ENCODE measurements at regions of chr22 and their contacts with region 1.

Region 1: GRCh38 chr22:21001560-21002325 is at the start of gene THAP7:
- DNase-seq: peak; percentile 90 to 99 (median 97)
- ATAC-seq: peak; percentile 86
- H3K4me3 ChIP-seq: peak within 1 kb of the TSS; percentile 81 to 82
- H3K4me3 Mint-ChIP-seq: peak within 1 kb of the TSS; percentile 91
- H3K27ac ChIP-seq: peak within 1 kb of the TSS; percentile 93 to 100
- H3K27ac Mint-ChIP-seq: peak within 1 kb of the TSS; percentile 99
- H3K4me1 ChIP-seq: peaks cover 38% of the 10 kb centered on the region
- H3K4me1 Mint-ChIP-seq: peaks cover 29% of the 10 kb centered on the region
- H3K27me3 ChIP-seq: no peaks in the 10 kb centered on the region
- H3K27me3 Mint-ChIP-seq: no peaks in the 10 kb centered on the region
- CTCF ChIP-seq: no peak
- total RNA-seq, gene THAP7: 71.2 to 73.6 TPM

Region 2: GRCh38 chr22:19717691-19718455 is 1283.9 kb before region 1 on chr22:
- CTCF ChIA-PET with region 1: no interaction called
- POLR2A ChIA-PET with region 1: no interaction called
- intact Hi-C with region 1: loop called in 1 of 2 experiments (anchors 5 kb)
- DNase-seq: peak; percentile 71 to 90 (median 78)
- ATAC-seq: peak; percentile 95
- H3K4me3 ChIP-seq: peak overlapping the region; percentile 29 to 46
- H3K4me3 Mint-ChIP-seq: peak overlapping the region; percentile 65
- H3K27ac ChIP-seq: no peak overlapping the region
- H3K27ac Mint-ChIP-seq: no peak overlapping the region
- H3K4me1 ChIP-seq: peaks cover 29% of the 10 kb centered on the region
- H3K4me1 Mint-ChIP-seq: peaks cover 12% of the 10 kb centered on the region
- H3K27me3 ChIP-seq: peaks cover 17 to 20% of the 10 kb centered on the region in 2 experiments
- H3K27me3 Mint-ChIP-seq: peaks cover 36% of the 10 kb centered on the region
- CTCF ChIP-seq: peak; percentile 97

Region 3: DNA sequence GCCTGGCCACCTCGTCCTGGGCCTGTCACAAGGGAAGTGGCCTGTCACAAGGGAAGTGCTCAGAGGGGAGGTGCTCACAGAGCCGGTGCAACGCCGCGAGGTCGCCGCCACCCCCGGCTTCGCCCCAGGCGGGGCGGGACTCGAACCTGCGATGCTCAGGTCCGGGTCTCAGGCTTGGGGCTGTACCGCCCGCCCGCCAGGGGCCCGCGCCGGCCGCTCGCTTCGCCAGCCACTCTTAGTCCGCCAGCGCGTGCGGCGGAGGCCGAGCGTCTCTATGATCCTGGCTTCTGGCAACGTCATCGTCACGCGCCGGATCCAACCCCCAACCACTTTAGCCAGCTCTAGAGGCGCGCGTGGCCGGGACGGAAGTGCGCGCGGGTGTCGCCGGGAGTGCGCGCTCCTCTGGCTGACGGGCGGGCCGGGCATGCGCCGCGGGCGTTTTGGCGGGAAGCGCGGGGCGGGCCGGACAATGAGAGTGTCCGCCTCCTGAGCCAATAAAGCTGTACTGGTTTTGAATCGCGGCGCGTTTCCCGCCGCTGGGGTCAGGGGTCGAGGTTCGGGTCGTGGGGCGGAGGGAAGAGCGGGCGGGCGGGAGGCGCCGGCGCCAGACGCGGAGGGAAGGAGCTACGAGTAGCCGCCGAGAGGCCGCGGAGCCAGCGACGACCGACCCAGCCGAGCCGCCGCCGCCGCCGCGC is 884.6 kb before region 1 on chr22 and contains the start of gene TRMT2A:
- CTCF ChIA-PET with region 1: no interaction called
- POLR2A ChIA-PET with region 1: no interaction called
- intact Hi-C with region 1: loop called in 1 of 2 experiments (anchors 2 kb)
- DNase-seq: peak; percentile 91 to 99 (median 96)
- ATAC-seq: peak; percentile 80
- H3K4me3 ChIP-seq: peak within 1 kb of the TSS; percentile 80 to 96
- H3K4me3 Mint-ChIP-seq: peak within 1 kb of the TSS; percentile 90
- H3K27ac ChIP-seq: peak within 1 kb of the TSS; percentile 81 to 94
- H3K27ac Mint-ChIP-seq: peak within 1 kb of the TSS; percentile 93
- H3K4me1 ChIP-seq: peaks cover 38% of the 10 kb centered on the region
- H3K4me1 Mint-ChIP-seq: peaks cover 43% of the 10 kb centered on the region
- H3K27me3 ChIP-seq: no peaks in the 10 kb centered on the region
- H3K27me3 Mint-ChIP-seq: no peaks in the 10 kb centered on the region
- CTCF ChIP-seq: no peak
- total RNA-seq, gene TRMT2A: 57.8 to 62.8 TPM

Region 4: GRCh38 chr22:20852076-20852475 is 149.7 kb before region 1 on chr22:
- CTCF ChIA-PET with region 1: no interaction called
- POLR2A ChIA-PET with region 1: no interaction called
- intact Hi-C with region 1: no loop called
- DNase-seq: no peak
- ATAC-seq: no peak
- H3K4me3 ChIP-seq: no peak overlapping the region
- H3K4me3 Mint-ChIP-seq: no peak overlapping the region
- H3K27ac ChIP-seq: no peak overlapping the region
- H3K27ac Mint-ChIP-seq: peak overlapping the region; percentile 37
- H3K4me1 ChIP-seq: peaks cover 24% of the 10 kb centered on the region
- H3K4me1 Mint-ChIP-seq: peaks cover 58% of the 10 kb centered on the region
- H3K27me3 ChIP-seq: no peaks in the 10 kb centered on the region
- H3K27me3 Mint-ChIP-seq: no peaks in the 10 kb centered on the region
- CTCF ChIP-seq: no peak

Region 5: DNA sequence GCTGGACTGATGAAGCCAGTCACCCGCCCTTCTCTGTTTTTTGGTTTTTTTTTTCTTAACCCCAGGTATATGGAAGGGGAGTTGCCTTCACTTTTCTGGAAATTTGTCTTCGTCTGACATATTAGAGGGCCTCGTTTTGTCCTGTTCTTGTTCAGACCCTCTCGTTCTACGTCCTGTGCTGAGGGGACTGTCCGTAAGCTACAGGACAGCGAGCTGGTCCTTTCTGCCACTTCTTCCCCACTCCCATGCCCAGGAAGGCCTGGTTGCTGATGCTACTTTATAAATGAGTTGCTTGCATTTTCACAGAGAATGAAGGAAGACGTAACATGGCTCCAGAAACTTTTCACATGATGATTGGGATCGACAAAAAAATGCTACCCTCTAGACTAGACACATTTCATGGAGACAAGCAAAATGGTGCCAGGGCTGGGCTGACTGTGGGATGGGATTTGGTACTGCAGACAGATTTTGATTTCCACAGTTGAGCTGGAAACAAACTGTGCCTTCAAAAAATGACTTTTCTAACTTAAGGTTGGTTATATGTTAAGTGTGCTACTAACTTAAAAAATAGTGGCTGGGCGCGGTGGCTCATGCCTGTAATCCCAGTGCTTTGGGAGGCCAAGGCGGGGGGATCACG is 111.7 kb before region 1 on chr22:
- CTCF ChIA-PET with region 1: no interaction called
- POLR2A ChIA-PET with region 1: no interaction called
- intact Hi-C with region 1: no loop called
- DNase-seq: no peak
- ATAC-seq: no peak
- H3K4me3 ChIP-seq: no peak overlapping the region
- H3K4me3 Mint-ChIP-seq: no peak overlapping the region
- H3K27ac ChIP-seq: no peak overlapping the region
- H3K27ac Mint-ChIP-seq: no peak overlapping the region
- H3K4me1 ChIP-seq: no peaks in the 10 kb centered on the region
- H3K4me1 Mint-ChIP-seq: no peaks in the 10 kb centered on the region
- H3K27me3 ChIP-seq: no peaks in the 10 kb centered on the region
- H3K27me3 Mint-ChIP-seq: peaks cover 2% of the 10 kb centered on the region
- CTCF ChIP-seq: no peak

Region 6: GRCh38 chr22:20916983-20917810 is 84.5 kb before region 1 on chr22 and contains the start of gene CRKL:
- CTCF ChIA-PET with region 1: no interaction called
- POLR2A ChIA-PET with region 1: no interaction called
- intact Hi-C with region 1: loop called (anchors 1 kb)
- DNase-seq: peak; percentile 89 to 99 (median 96)
- ATAC-seq: peak; percentile 94
- H3K4me3 ChIP-seq: peak within 1 kb of the TSS; percentile 96 to 99
- H3K4me3 Mint-ChIP-seq: peak within 1 kb of the TSS; percentile 97
- H3K27ac ChIP-seq: peak within 1 kb of the TSS; percentile 83 to 90
- H3K27ac Mint-ChIP-seq: peak within 1 kb of the TSS; percentile 95
- H3K4me1 ChIP-seq: peaks cover 34% of the 10 kb centered on the region
- H3K4me1 Mint-ChIP-seq: peaks cover 36% of the 10 kb centered on the region
- H3K27me3 ChIP-seq: no peaks in the 10 kb centered on the region
- H3K27me3 Mint-ChIP-seq: no peaks in the 10 kb centered on the region
- CTCF ChIP-seq: peak; percentile 88
- total RNA-seq, gene CRKL: 57.7 to 60.2 TPM

Region 7: DNA sequence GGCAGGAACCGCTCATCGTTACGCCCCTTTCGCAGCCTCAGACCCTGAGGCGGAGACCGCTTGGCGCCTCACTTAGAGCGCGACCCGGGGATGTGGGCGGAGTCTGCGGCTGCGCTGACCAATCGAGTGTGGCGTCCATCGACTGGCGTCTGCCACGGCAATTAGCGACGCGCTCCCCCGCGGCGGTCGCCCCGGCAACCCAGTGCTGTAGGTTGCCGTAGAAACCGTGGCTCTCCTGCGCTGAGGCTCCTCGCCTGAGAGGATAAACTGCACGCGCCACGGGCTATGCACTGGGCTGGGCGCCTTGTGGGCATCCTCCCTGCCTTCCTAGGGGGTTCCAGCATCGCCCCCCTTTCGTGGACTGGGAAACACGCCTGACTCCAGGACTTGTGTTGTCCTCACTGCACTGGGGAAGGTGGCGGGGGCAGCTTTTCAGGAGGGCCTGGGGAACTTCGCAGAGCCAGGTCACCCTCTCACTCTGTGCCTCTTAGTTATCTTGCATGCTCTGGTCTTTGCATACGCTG is 12.5 kb after region 1 on chr22:
- CTCF ChIA-PET with region 1: interaction called, 6 read pairs
- POLR2A ChIA-PET with region 1: interaction called, 7 read pairs
- intact Hi-C with region 1: loop called in 1 of 2 experiments (anchors 1 kb)
- DNase-seq: peak; percentile 65 to 95 (median 84)
- ATAC-seq: peak; percentile 90
- H3K4me3 ChIP-seq: peak overlapping the region; percentile 46 to 70
- H3K4me3 Mint-ChIP-seq: peak overlapping the region; percentile 84
- H3K27ac ChIP-seq: peak overlapping the region; percentile 66 to 78
- H3K27ac Mint-ChIP-seq: peak overlapping the region; percentile 88
- H3K4me1 ChIP-seq: peaks cover 23% of the 10 kb centered on the region
- H3K4me1 Mint-ChIP-seq: peaks cover 27% of the 10 kb centered on the region
- H3K27me3 ChIP-seq: no peaks in the 10 kb centered on the region
- H3K27me3 Mint-ChIP-seq: no peaks in the 10 kb centered on the region
- CTCF ChIP-seq: no peak

Region 8: GRCh38 chr22:21045585-21046294 is 44.0 kb after region 1 on chr22 and contains the start of gene LRRC74B:
- CTCF ChIA-PET with region 1: no interaction called
- POLR2A ChIA-PET with region 1: no interaction called
- intact Hi-C with region 1: no loop called
- DNase-seq: peak; percentile 37 to 79 (median 71)
- ATAC-seq: peak; percentile 89
- H3K4me3 ChIP-seq: peak within 1 kb of the TSS; percentile 17 to 29
- H3K4me3 Mint-ChIP-seq: peak within 1 kb of the TSS; percentile 57
- H3K27ac ChIP-seq: peak within 1 kb of the TSS in 1 of 2 experiments; percentile 17
- H3K27ac Mint-ChIP-seq: no peak within 1 kb of the TSS
- H3K4me1 ChIP-seq: peaks cover 23% of the 10 kb centered on the region
- H3K4me1 Mint-ChIP-seq: peaks cover 22% of the 10 kb centered on the region
- H3K27me3 ChIP-seq: peaks cover 0 to 5% of the 10 kb centered on the region in 2 experiments
- H3K27me3 Mint-ChIP-seq: peaks cover 15% of the 10 kb centered on the region
- CTCF ChIP-seq: no peak
- total RNA-seq, gene LRRC74B: not detected

Region 9: DNA sequence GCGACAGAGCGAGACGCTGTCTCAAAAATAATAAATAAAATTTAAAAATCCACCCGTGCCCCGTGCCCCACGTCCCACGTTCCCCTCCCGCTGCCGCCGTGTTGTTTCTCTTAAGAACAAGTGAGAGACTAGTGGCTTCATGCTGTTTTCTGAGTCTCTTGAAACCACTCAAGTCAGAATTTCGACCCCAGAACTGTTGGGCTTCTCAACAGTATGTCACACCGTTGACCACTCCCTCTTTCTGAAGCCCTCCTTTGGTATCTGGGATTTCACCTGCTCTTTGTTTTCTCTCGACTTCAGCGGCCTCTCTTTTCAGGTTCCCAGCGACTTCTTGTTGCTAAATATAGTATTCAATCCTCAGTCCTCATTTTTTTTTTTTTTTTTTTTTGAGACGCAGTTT is 665.0 kb after region 1 on chr22:
- CTCF ChIA-PET with region 1: no interaction called
- POLR2A ChIA-PET with region 1: no interaction called
- intact Hi-C with region 1: loop called in 1 of 2 experiments (anchors 5 kb)
- DNase-seq: no peak
- ATAC-seq: no peak
- H3K4me3 ChIP-seq: peak overlapping the region; percentile 93 to 98
- H3K4me3 Mint-ChIP-seq: peak overlapping the region; percentile 99
- H3K27ac ChIP-seq: peak overlapping the region in 1 of 2 experiments; percentile 89
- H3K27ac Mint-ChIP-seq: peak overlapping the region; percentile 97
- H3K4me1 ChIP-seq: peaks cover 15% of the 10 kb centered on the region
- H3K4me1 Mint-ChIP-seq: peaks cover 32% of the 10 kb centered on the region
- H3K27me3 ChIP-seq: no peaks in the 10 kb centered on the region
- H3K27me3 Mint-ChIP-seq: no peaks in the 10 kb centered on the region
- CTCF ChIP-seq: no peak